Mammary epithelial cell (primary cell): ENCODE measurements at regions of chr4 and their contacts with region 1.

Region 1: DNA sequence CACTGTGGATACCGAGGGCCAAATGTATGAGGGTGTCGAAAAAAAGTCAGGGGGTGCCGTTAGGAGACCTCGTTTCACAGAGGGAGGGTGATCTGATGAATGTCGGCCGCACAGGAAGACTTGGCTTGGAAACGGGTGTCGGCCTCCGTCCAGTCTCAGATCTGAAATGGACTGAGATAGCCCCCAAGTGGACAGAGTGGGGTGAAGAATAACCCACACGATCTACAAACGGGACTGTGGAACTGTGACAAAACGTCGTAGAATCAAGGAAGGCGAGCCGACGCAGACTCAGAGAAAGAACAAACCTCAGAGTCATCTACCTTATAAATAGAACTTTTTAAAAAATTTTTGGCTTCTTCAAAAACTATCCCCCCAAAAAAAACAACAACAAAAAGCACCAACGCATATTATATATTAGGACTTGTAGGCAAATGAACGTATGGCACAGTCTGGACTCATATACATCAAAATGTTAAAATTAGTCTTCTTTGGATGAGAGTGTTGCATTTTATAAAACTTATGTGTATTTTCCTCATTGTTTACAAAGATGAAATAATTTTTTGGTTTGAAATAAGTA is 63.8 kb upstream of the IRF2 start:
- DNase-seq: peak; percentile 82
- H3K4me3 ChIP-seq: peak overlapping the region; percentile 63 to 71 (median 67)
- H3K27ac ChIP-seq: peak overlapping the region; percentile 87
- H3K4me1 ChIP-seq: peaks cover 31% of the 10 kb centered on the region
- H3K27me3 ChIP-seq: no peaks in the 10 kb centered on the region
- CTCF ChIP-seq: peak; percentile 46 to 78

Region 2: GRCh38 chr4:184263910-184264732 is 274.0 kb before region 1 on chr4:
- CTCF ChIA-PET with region 1: interaction called, 5 read pairs
- dilution Hi-C with region 1: no loop called
- in situ Hi-C with region 1: loop called (anchors 5 to 10 kb)
- intact Hi-C with region 1: loop called (anchors 1 kb)
- DNase-seq: peak; percentile 79
- H3K4me3 ChIP-seq: no peak overlapping the region
- H3K27ac ChIP-seq: no peak overlapping the region
- H3K4me1 ChIP-seq: peaks cover 26% of the 10 kb centered on the region
- H3K27me3 ChIP-seq: peaks cover under 1% of the 10 kb centered on the region
- CTCF ChIP-seq: peak; percentile 79 to 80

Region 3: DNA sequence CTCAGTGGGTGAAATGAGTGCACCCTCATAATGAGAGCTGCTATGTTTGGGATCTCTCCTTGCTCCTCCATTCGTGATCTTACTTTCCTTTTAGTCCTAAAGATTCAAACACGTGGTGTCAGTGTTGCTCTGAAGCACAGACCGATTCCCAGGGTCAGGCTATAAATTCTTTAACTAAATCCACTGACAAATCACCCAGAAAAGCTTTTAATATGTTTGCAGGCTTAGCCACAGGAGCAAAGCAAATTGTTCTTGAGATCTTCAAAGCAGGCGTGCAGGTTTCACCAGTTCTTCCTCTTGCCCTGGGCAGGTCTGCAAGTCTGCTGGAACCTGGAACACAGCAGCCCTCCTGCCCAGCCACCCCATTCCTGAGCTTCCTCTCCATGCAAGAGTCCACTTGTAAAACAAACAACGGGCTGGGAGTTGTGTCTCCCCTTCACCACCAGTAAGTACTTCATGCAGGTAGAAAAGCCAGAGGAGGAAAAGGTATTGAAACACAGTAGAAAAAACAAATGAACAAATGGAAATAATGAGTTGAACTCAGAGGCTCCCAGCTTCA is 250.3 kb before region 1 on chr4:
- CTCF ChIA-PET with region 1: interaction called, 9 read pairs
- dilution Hi-C with region 1: no loop called
- in situ Hi-C with region 1: no loop called
- intact Hi-C with region 1: loop called (anchors 1 kb)
- DNase-seq: peak; percentile 50
- H3K4me3 ChIP-seq: no peak overlapping the region
- H3K27ac ChIP-seq: no peak overlapping the region
- H3K4me1 ChIP-seq: peaks cover 8% of the 10 kb centered on the region
- H3K27me3 ChIP-seq: no peaks in the 10 kb centered on the region
- CTCF ChIP-seq: peak; percentile 4 to 47

Region 4: GRCh38 chr4:184384056-184384809 is 153.9 kb before region 1 on chr4:
- CTCF ChIA-PET with region 1: no interaction called
- dilution Hi-C with region 1: no loop called
- in situ Hi-C with region 1: no loop called
- intact Hi-C with region 1: loop called (anchors 2 kb)
- DNase-seq: peak; percentile 93
- H3K4me3 ChIP-seq: peak overlapping the region; percentile 35 to 52 (median 45)
- H3K27ac ChIP-seq: peak overlapping the region; percentile 96
- H3K4me1 ChIP-seq: peaks cover 41% of the 10 kb centered on the region
- H3K27me3 ChIP-seq: no peaks in the 10 kb centered on the region
- CTCF ChIP-seq: no peak

Region 5: GRCh38 chr4:184400375-184400870 is 137.7 kb before region 1 on chr4:
- CTCF ChIA-PET with region 1: no interaction called
- dilution Hi-C with region 1: no loop called
- in situ Hi-C with region 1: no loop called
- intact Hi-C with region 1: loop called (anchors 2 kb)
- DNase-seq: peak; percentile 92
- H3K4me3 ChIP-seq: no peak overlapping the region
- H3K27ac ChIP-seq: peak overlapping the region; percentile 89
- H3K4me1 ChIP-seq: peaks cover 29% of the 10 kb centered on the region
- H3K27me3 ChIP-seq: no peaks in the 10 kb centered on the region
- CTCF ChIP-seq: peak; percentile 28 to 41

Region 6: GRCh38 chr4:184417802-184418511 is 120.2 kb before region 1 on chr4:
- CTCF ChIA-PET with region 1: no interaction called
- dilution Hi-C with region 1: no loop called
- in situ Hi-C with region 1: loop called in 1 of 2 experiments (anchors 10 kb)
- intact Hi-C with region 1: loop called (anchors 5 kb)
- DNase-seq: peak; percentile 99
- H3K4me3 ChIP-seq: peak overlapping the region in 2 of 3 experiments; percentile 3 to 12
- H3K27ac ChIP-seq: peak overlapping the region; percentile 89
- H3K4me1 ChIP-seq: peaks cover 29% of the 10 kb centered on the region
- H3K27me3 ChIP-seq: no peaks in the 10 kb centered on the region
- CTCF ChIP-seq: peak; percentile 6 to 41

Region 7: DNA sequence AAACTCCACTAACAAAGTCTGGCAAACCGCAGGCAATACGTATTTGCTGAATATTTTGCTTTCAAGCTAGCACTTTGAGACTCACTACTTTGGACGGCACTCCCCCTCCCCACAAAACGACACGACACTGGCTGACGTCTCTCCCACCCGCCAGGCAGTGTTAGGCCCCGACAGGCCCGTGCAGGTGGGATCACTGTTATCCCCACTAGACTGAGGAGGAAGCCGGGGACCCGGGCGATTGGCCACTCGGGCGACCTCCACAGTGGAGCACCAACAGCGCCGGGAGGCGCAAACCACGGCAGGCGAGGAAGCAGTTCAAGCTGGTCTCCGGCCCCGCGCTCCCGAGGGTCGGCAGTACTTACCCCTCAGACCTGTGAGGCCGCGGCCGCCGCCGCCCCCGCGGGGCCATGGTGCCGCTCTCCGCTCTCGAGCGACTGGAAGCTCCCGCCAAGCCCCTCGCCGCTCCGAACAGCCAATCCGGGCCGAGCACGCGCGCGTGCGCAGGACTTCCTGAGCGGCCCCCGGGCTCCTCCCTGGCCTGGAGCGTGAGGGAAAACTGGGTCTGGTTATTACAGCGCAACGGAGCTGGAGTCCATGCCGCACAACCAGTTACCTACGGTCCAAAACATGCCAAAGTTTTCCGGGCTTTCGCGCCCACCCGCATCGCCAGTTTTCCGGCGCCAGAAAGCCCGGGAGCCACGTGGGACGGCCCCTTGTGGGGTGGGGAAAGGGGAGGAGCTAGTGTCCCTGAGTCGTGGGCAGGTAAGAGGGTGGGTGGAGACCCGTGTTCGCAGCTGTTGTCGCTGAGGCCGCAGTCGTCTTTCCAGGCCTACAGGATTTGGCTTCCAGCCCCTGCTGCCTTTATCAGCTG is 195.8 kb after region 1 on chr4 and contains the start of gene CENPU:
- CTCF ChIA-PET with region 1: no interaction called
- dilution Hi-C with region 1: no loop called
- in situ Hi-C with region 1: no loop called
- intact Hi-C with region 1: loop called (anchors 5 kb)
- DNase-seq: peak; percentile 98
- H3K4me3 ChIP-seq: peak within 1 kb of the TSS; percentile 57 to 98 (median 94)
- H3K27ac ChIP-seq: peak within 1 kb of the TSS; percentile 96
- H3K4me1 ChIP-seq: peaks cover 31% of the 10 kb centered on the region
- H3K27me3 ChIP-seq: no peaks in the 10 kb centered on the region
- CTCF ChIP-seq: no peak
- total RNA-seq, gene CENPU: 4.5 to 38.3 TPM

Region 8: GRCh38 chr4:184860018-184860779 is 322.1 kb after region 1 on chr4:
- CTCF ChIA-PET with region 1: no interaction called
- dilution Hi-C with region 1: no loop called
- in situ Hi-C with region 1: no loop called
- intact Hi-C with region 1: no loop called
- DNase-seq: no peak
- H3K4me3 ChIP-seq: no peak overlapping the region
- H3K27ac ChIP-seq: no peak overlapping the region
- H3K4me1 ChIP-seq: no peaks in the 10 kb centered on the region
- H3K27me3 ChIP-seq: no peaks in the 10 kb centered on the region
- CTCF ChIP-seq: no peak